ENCODE measurements at regions of chr4 and their contacts with region 1.

Region 1: GRCh38 chr4:173257732-173258717 is 76.1 kb downstream of the HMGB2 start:
- DNase-seq: peak; percentile 10 to 71 (median 56)
- ATAC-seq: peak; percentile 77
- H3K4me3 ChIP-seq: no peak overlapping the region
- H3K4me3 Mint-ChIP-seq: no peak overlapping the region
- H3K27ac ChIP-seq: no peak overlapping the region
- H3K27ac Mint-ChIP-seq: no peak overlapping the region
- H3K4me1 ChIP-seq: no peaks in the 10 kb centered on the region
- H3K4me1 Mint-ChIP-seq: peaks cover 4% of the 10 kb centered on the region
- H3K27me3 ChIP-seq: no peaks in the 10 kb centered on the region
- H3K27me3 Mint-ChIP-seq: no peaks in the 10 kb centered on the region
- CTCF ChIP-seq: peak; percentile 77

Region 2: DNA sequence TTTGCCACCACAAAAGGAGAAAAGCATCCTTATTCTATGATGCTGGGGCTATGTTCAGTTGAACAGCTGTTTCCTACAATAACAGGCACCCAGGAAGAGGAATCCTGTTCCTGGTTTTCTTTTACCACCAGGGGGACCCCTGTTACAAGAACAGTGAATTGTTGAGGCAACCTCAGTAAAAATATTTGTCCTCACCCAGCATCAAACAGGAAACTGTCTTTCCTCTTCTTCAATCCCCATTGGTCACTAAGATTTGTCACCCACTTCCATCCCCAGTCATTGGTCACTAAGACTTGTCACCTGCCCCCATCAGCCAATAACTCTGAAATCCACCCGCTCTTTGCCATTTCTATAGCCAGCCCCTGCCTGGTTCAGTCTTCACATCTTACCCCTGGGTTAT is 232.9 kb before region 1 on chr4:
- CTCF ChIA-PET with region 1: interaction called, 44 read pairs
- POLR2A ChIA-PET with region 1: no interaction called
- intact Hi-C with region 1: loop called (anchors 1 kb)
- DNase-seq: peak in 3 of 9 experiments; percentile 16 to 61 (median 42)
- ATAC-seq: peak; percentile 44
- H3K4me3 ChIP-seq: no peak overlapping the region
- H3K4me3 Mint-ChIP-seq: no peak overlapping the region
- H3K27ac ChIP-seq: no peak overlapping the region
- H3K27ac Mint-ChIP-seq: no peak overlapping the region
- H3K4me1 ChIP-seq: no peaks in the 10 kb centered on the region
- H3K4me1 Mint-ChIP-seq: peaks cover 4% of the 10 kb centered on the region
- H3K27me3 ChIP-seq: no peaks in the 10 kb centered on the region
- H3K27me3 Mint-ChIP-seq: peaks cover 2% of the 10 kb centered on the region
- CTCF ChIP-seq: peak; percentile 51

Region 3: GRCh38 chr4:173094739-173095421 is 163.1 kb before region 1 on chr4:
- CTCF ChIA-PET with region 1: no interaction called
- POLR2A ChIA-PET with region 1: no interaction called
- intact Hi-C with region 1: no loop called
- DNase-seq: no peak
- ATAC-seq: no peak
- H3K4me3 ChIP-seq: no peak overlapping the region
- H3K4me3 Mint-ChIP-seq: no peak overlapping the region
- H3K27ac ChIP-seq: no peak overlapping the region
- H3K27ac Mint-ChIP-seq: no peak overlapping the region
- H3K4me1 ChIP-seq: no peaks in the 10 kb centered on the region
- H3K4me1 Mint-ChIP-seq: no peaks in the 10 kb centered on the region
- H3K27me3 ChIP-seq: no peaks in the 10 kb centered on the region
- H3K27me3 Mint-ChIP-seq: no peaks in the 10 kb centered on the region
- CTCF ChIP-seq: no peak

Region 4: GRCh38 chr4:173246719-173247118 is 11.3 kb before region 1 on chr4:
- CTCF ChIA-PET with region 1: interaction called, 11 read pairs
- POLR2A ChIA-PET with region 1: no interaction called
- intact Hi-C with region 1: no loop called
- DNase-seq: no peak
- ATAC-seq: no peak
- H3K4me3 ChIP-seq: no peak overlapping the region
- H3K4me3 Mint-ChIP-seq: no peak overlapping the region
- H3K27ac ChIP-seq: no peak overlapping the region
- H3K27ac Mint-ChIP-seq: no peak overlapping the region
- H3K4me1 ChIP-seq: peaks cover 10% of the 10 kb centered on the region
- H3K4me1 Mint-ChIP-seq: peaks cover 24% of the 10 kb centered on the region
- H3K27me3 ChIP-seq: no peaks in the 10 kb centered on the region
- H3K27me3 Mint-ChIP-seq: no peaks in the 10 kb centered on the region
- CTCF ChIP-seq: no peak

Region 5: DNA sequence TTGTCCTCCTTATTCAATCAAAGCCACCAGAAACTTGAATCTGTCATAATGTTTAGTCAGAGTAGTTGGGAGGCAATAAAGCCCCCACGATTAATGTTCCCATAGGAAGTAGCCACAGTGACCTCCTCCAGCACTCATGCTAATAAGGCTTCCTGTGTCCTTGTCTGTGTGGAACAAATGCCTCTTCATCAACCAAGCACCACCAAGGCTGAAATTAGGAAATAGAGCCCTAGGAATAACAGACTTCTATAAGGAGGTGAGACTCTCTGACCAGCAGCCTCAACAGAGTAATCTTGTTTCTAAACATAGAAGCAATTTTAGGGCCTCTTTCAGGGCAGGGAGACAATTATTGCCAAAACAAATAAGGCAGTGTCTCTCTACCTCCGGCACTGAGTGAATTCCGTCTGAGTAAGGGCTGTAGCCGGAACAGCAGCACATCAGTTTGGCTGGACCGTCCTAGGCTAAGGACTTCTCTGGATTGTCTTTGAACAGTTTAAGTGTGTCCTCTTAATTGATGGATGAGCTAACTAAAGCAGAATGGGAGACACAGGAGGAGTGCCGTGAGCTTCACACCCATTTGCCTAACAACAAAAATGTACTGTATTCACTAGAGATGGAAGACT is 601.2 kb after region 1 on chr4:
- CTCF ChIA-PET with region 1: no interaction called
- POLR2A ChIA-PET with region 1: no interaction called
- intact Hi-C with region 1: no loop called
- DNase-seq: no peak
- ATAC-seq: no peak
- H3K4me3 ChIP-seq: no peak overlapping the region
- H3K4me3 Mint-ChIP-seq: no peak overlapping the region
- H3K27ac ChIP-seq: no peak overlapping the region
- H3K27ac Mint-ChIP-seq: no peak overlapping the region
- H3K4me1 ChIP-seq: no peaks in the 10 kb centered on the region
- H3K4me1 Mint-ChIP-seq: no peaks in the 10 kb centered on the region
- H3K27me3 ChIP-seq: no peaks in the 10 kb centered on the region
- H3K27me3 Mint-ChIP-seq: no peaks in the 10 kb centered on the region
- CTCF ChIP-seq: no peak

Measured in CD8-positive, alpha-beta T cell (primary cell).